Activated CD4-positive, alpha-beta T cell treated with anti-CD3 and anti-CD28 coated beads for 36 hours (primary cell): ENCODE measurements at regions of chr2 and their contacts with region 1.

Region 1: DNA sequence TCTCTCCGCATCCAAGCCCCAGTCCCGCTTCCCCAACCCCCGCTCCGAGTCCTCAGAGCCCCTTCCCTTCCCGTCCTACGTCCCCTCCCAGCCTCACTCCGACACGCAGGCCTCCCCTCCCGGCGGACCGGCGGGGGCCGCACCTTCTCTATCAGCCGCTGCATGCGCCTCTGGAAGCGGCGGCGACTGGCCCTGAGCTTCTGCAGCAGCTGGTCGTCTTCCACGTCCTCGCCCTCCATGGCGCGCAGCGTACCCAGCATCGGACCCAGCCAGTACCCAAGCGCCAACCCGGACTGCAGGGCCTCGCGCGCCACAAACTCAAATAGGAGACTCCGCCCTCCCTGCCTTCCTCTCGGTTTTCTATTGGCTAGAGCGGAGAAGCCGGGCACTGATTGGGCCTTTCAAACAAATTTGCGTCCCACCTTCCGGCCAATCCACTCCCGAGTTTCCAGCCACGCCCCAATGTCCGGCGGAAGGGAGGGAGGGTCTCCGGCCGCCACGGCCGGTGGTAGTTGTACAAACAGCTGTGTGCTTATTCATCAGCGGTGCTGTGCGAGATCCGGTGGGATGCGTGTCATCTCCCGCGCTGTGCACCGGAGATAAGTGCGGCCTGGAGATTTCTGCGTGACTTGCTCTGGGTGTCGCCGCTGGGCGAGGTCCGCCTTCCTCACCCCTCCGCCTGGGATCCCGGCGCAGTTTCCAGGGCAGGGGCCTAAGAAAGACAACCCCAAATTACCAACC is at the start of gene HJURP:
- DNase-seq: peak; percentile 96
- ATAC-seq: peak; percentile 95
- H3K4me3 Mint-ChIP-seq: peak within 1 kb of the TSS; percentile 97
- H3K27ac Mint-ChIP-seq: peak within 1 kb of the TSS; percentile 98
- H3K4me1 Mint-ChIP-seq: peaks cover 26% of the 10 kb centered on the region
- H3K27me3 Mint-ChIP-seq: no peaks in the 10 kb centered on the region
- total RNA-seq, gene HJURP: 94.6 to 111 TPM

Region 2: GRCh38 chr2:233418761-233419625 is 435.4 kb before region 1 on chr2:
- CTCF ChIA-PET with region 1: no interaction called
- POLR2A ChIA-PET with region 1: no interaction called
- intact Hi-C with region 1: loop called in 1 of 2 experiments (anchors 10 kb)
- DNase-seq: peak; percentile 72
- ATAC-seq: peak; percentile 52
- H3K4me3 Mint-ChIP-seq: peak overlapping the region; percentile 63
- H3K27ac Mint-ChIP-seq: peak overlapping the region; percentile 81
- H3K4me1 Mint-ChIP-seq: peaks cover 97% of the 10 kb centered on the region
- H3K27me3 Mint-ChIP-seq: no peaks in the 10 kb centered on the region

Region 3: GRCh38 chr2:233566141-233566960 is 288.1 kb before region 1 on chr2 and contains the start of gene USP40:
- CTCF ChIA-PET with region 1: no interaction called
- POLR2A ChIA-PET with region 1: interaction called, 4 read pairs
- intact Hi-C with region 1: loop called in 1 of 2 experiments (anchors 5 kb)
- DNase-seq: peak; percentile 72
- ATAC-seq: peak; percentile 83
- H3K4me3 Mint-ChIP-seq: peak within 1 kb of the TSS; percentile 90
- H3K27ac Mint-ChIP-seq: peak within 1 kb of the TSS; percentile 97
- H3K4me1 Mint-ChIP-seq: peaks cover 6% of the 10 kb centered on the region
- H3K27me3 Mint-ChIP-seq: no peaks in the 10 kb centered on the region
- total RNA-seq, gene USP40: 12.0 to 12.9 TPM

Region 4: DNA sequence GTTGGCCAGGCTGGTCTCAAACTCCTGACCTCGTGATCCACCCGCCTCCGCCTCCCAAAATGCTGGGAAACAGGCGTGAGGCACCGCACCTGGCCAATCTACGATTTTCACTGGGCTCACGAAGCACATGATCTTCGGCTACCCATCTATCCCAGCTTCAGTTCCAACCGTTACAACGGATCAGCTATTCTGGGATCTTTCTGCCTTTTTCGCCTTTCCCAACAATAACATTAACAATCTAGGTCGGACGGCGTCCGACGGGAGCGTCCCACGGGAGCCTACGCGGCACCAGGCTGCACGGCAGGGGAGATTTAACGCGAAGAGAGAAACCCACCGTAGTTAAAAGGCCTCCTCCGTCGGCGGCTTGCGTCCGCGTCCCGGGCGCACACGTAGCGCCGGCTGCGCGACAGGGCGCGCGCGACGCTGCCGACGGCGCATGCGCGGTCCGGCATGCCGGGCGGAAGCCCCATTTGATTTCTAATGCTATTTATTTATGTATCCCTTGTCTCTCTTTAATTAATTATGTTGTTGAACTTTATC is 13.7 kb after region 1 on chr2 and contains the start of gene MSL3B:
- CTCF ChIA-PET with region 1: interaction called, 12 read pairs
- POLR2A ChIA-PET with region 1: no interaction called
- intact Hi-C with region 1: loop called in 1 of 2 experiments (anchors 1 kb)
- DNase-seq: peak; percentile 73
- ATAC-seq: peak; percentile 86
- H3K4me3 Mint-ChIP-seq: peak within 1 kb of the TSS; percentile 79
- H3K27ac Mint-ChIP-seq: peak within 1 kb of the TSS; percentile 81
- H3K4me1 Mint-ChIP-seq: peaks cover 12% of the 10 kb centered on the region
- H3K27me3 Mint-ChIP-seq: peaks cover 14% of the 10 kb centered on the region